ENCODE measurements at regions of chr6 and their contacts with region 1.

Region 1: GRCh38 chr6:143700684-143701348 is 23.1 kb downstream of the PHACTR2 start:
- DNase-seq: no peak
- ATAC-seq: no peak
- H3K4me3 ChIP-seq: no peak overlapping the region
- H3K4me3 Mint-ChIP-seq: no peak overlapping the region
- H3K27ac ChIP-seq: no peak overlapping the region
- H3K27ac Mint-ChIP-seq: no peak overlapping the region
- H3K4me1 ChIP-seq: no peaks in the 10 kb centered on the region
- H3K4me1 Mint-ChIP-seq: peaks cover 20% of the 10 kb centered on the region
- H3K27me3 ChIP-seq: no peaks in the 10 kb centered on the region
- H3K27me3 Mint-ChIP-seq: no peaks in the 10 kb centered on the region
- CTCF ChIP-seq: no peak

Region 2: DNA sequence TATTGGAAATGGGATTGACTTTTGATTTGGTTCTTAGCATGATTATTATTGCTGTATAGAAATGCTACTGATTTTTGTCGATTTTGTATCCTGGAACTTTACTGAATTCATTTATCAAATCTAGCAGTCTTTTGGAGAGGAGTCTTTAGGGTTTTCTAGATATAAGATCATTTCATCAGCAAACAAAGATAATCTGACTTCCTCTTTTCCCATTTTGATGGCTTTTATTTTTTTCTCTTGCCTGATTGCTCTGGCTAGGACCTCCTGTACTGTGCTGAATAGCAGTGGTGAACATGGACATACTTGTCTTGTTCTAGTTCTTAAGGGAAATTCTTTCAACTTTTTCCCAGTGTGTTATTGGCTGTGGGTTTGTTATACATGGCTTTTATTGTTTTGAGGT is 228.0 kb after region 1 on chr6:
- CTCF ChIA-PET with region 1: no interaction called
- POLR2A ChIA-PET with region 1: no interaction called
- intact Hi-C with region 1: loop called in 1 of 2 experiments (anchors 10 kb)
- DNase-seq: no peak
- ATAC-seq: no peak
- H3K4me3 ChIP-seq: no peak overlapping the region
- H3K4me3 Mint-ChIP-seq: no peak overlapping the region
- H3K27ac ChIP-seq: no peak overlapping the region
- H3K27ac Mint-ChIP-seq: no peak overlapping the region
- H3K4me1 ChIP-seq: no peaks in the 10 kb centered on the region
- H3K4me1 Mint-ChIP-seq: no peaks in the 10 kb centered on the region
- H3K27me3 ChIP-seq: no peaks in the 10 kb centered on the region
- H3K27me3 Mint-ChIP-seq: no peaks in the 10 kb centered on the region
- CTCF ChIP-seq: no peak